ENCODE measurements at regions of chr13 and their contacts with region 1.

Region 1: GRCh38 chr13:82749551-82749950 is 1132.7 kb downstream of the SLITRK1 start:
- DNase-seq: no peak

Region 2: GRCh38 chr13:82772816-82773215 is 23.3 kb after region 1 on chr13:
- intact Hi-C with region 1: loop called in 1 of 2 experiments (anchors 1 kb)
- DNase-seq: no peak

Region 3: DNA sequence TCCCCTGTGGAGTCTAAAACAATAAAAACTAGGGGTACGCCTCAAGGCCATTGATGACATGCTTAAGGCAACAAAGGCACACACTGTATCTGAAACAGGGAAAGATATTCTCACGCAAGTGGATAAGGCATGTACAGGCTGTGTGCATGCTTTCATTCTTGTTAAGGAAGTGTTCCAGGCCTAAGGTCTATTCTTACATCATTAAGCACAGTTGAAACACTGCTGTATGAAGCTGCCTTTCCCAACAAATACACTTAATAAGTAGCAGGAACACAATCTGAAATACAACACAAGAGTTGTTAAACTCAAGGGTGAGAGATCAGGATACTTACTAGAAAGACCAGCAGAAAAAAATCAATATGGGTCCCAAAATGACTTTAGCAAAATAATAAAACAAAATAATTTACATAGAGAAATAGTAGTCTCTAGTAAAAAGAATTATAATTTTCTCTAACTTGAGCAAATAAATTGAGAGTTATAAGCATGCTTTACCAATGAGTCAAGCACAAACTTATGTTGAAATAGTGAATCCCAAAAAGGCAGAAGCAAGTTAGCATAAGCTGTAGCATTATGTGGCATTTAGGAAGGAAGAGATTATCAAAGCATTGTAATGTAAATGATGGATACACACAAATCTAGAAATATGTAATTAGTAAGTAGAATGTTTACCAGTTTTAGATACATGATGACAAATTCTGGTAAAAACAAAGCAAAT is 335.8 kb after region 1 on chr13:
- intact Hi-C with region 1: no loop called
- DNase-seq: no peak

Measured in posterior vena cava (tissue), 2 donors.